Activated CD4-positive, alpha-beta memory T cell treated with anti-CD3 and anti-CD28 coated beads for 36 hours (primary cell): ENCODE measurements at regions of chr10 and their contacts with region 1.

Region 1: DNA sequence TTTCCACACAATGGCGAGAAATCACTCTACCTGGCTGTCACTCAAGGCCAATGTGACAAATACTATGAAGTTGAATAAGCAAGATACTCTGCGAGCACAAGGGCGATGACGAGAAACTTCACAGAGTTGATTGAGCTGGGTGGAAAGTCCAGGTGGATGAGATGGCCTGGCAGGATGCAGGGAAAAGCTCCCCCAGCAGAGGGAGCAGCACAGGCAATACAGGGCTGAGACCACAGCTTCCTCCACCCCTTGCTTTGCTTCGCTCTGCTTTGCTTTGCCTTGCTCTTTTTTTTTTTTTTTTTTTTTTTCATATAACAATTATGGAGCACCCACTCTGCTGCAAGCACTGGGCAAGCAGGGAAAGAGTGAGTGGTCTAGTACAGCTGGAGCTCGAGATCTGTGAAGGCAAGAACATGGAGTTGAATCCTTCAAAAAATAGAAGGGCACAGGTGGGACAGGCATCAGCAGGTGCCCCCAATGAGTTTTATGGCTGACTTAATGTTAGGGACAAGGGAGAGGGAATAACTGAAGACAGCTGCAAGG is 88.3 kb downstream of the CABCOCO1 start:
- DNase-seq: peak; percentile 84
- H3K4me3 Mint-ChIP-seq: no peak overlapping the region
- H3K27ac Mint-ChIP-seq: peak overlapping the region; percentile 44
- H3K4me1 Mint-ChIP-seq: peaks cover 24% of the 10 kb centered on the region
- H3K27me3 Mint-ChIP-seq: no peaks in the 10 kb centered on the region

Region 2: DNA sequence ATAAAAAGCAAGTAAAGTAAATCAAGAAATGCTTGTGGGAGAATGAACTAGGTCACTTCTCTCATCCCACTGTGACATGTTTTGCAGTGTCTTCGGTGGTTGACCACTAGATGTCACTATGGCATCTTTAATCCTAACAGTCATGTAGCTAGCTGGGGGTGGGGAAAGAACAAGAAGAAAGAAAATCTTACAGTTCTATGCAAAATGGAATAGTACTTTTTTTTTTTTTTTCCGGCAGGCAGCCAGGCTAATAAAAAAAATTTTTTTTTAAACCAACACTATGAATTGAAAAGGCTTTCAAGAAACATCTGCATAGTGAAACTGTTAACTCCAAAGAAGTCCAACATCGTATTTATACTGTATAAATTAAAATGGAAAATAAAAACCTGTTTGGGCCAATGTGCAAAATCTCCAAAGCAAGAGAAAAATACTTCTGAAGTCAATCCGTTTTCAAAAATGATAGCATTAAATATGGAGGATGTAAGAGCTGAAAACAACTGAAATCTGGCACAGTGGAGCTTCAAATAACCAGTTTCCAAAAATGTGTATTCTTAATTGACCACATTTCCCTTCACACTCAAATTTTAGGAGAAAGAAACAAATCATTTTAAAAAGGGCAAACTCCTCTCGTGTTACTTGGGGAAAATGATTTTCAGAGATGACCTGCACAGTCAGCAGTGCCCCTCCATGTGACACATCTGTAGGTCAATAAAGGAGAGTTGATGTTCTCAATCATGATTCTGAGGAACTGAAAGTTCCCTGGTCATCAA is 934.2 kb before region 1 on chr10:
- CTCF ChIA-PET with region 1: no interaction called
- POLR2A ChIA-PET with region 1: no interaction called
- intact Hi-C with region 1: loop called (anchors 10 kb)
- DNase-seq: peak; percentile 15
- H3K4me3 Mint-ChIP-seq: no peak overlapping the region
- H3K27ac Mint-ChIP-seq: no peak overlapping the region
- H3K4me1 Mint-ChIP-seq: peaks cover 3% of the 10 kb centered on the region
- H3K27me3 Mint-ChIP-seq: no peaks in the 10 kb centered on the region

Region 3: DNA sequence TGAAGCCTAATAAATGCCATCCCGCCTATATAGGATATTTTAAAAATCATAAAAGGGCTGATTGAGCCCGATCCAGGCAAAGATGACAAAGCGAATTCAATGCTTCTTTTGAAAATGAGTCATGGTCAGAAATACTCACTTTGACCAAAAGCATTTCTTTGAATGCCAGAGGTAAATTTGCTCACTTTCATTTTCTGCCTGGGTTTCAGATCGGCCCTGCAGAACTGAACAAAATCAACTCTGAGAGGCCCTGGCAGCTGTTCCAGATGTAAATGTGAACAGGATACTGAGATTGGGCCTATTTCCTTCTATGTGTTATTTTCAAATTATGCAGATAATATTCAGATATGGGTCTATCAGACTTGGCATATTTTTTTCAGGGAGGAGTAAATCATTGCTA is 35.7 kb after region 1 on chr10:
- CTCF ChIA-PET with region 1: interaction called, 10 read pairs
- POLR2A ChIA-PET with region 1: interaction called, 4 read pairs
- intact Hi-C with region 1: loop called (anchors 1 kb)
- DNase-seq: peak; percentile 49
- H3K4me3 Mint-ChIP-seq: no peak overlapping the region
- H3K27ac Mint-ChIP-seq: peak overlapping the region; percentile 19
- H3K4me1 Mint-ChIP-seq: peaks cover 49% of the 10 kb centered on the region
- H3K27me3 Mint-ChIP-seq: no peaks in the 10 kb centered on the region

Region 4: GRCh38 chr10:61821153-61821552 is 70.2 kb after region 1 on chr10:
- CTCF ChIA-PET with region 1: interaction called, 18 read pairs
- POLR2A ChIA-PET with region 1: interaction called, 3 read pairs
- intact Hi-C with region 1: loop called (anchors 5 kb)
- DNase-seq: no peak
- H3K4me3 Mint-ChIP-seq: no peak overlapping the region
- H3K27ac Mint-ChIP-seq: no peak overlapping the region
- H3K4me1 Mint-ChIP-seq: no peaks in the 10 kb centered on the region
- H3K27me3 Mint-ChIP-seq: no peaks in the 10 kb centered on the region

Region 5: GRCh38 chr10:61869774-61870525 is 119.0 kb after region 1 on chr10:
- CTCF ChIA-PET with region 1: interaction called, 44 read pairs
- POLR2A ChIA-PET with region 1: no interaction called
- intact Hi-C with region 1: loop called (anchors 1 kb)
- DNase-seq: no peak
- H3K4me3 Mint-ChIP-seq: no peak overlapping the region
- H3K27ac Mint-ChIP-seq: no peak overlapping the region
- H3K4me1 Mint-ChIP-seq: peaks cover 13% of the 10 kb centered on the region
- H3K27me3 Mint-ChIP-seq: no peaks in the 10 kb centered on the region

Region 6: DNA sequence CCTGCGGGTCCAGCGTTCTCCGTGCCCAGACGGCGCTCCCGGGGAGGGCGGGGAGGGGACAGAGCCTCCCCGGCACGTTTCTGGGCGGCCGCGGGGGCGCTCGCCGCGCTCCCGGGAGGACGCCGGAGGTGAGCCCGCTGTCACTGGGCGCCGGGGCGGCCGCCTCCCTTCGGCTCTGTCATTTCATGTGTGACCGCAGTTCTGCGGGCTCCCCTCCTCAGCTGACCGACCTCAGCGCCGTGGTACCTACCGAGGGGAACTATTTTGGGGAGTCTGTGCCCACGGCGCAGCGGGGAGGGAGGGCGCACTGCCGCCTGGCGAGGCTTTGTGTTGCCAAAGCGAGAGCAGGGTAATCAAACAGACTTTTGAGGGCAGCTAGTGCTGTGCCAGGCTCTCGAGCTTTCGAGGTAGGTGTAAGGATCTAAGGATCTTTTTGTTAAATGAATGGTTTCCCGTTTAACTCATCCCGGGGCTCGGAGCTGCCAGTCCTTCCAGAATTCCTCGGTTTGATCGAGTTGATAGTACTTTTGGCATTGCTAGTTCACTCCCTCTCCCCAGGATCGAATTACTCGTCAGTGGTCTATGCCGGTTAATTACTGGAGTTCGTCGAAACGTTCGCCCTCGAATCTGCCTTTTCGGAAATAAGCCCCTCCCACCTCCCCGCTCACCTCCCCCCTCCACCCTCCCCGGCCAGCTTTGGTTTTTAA is 152.4 kb after region 1 on chr10:
- CTCF ChIA-PET with region 1: interaction called, 14 read pairs
- POLR2A ChIA-PET with region 1: interaction called, 4 read pairs
- intact Hi-C with region 1: no loop called
- DNase-seq: peak; percentile 84
- H3K4me3 Mint-ChIP-seq: peak overlapping the region; percentile 90
- H3K27ac Mint-ChIP-seq: peak overlapping the region; percentile 95
- H3K4me1 Mint-ChIP-seq: peaks cover 45% of the 10 kb centered on the region
- H3K27me3 Mint-ChIP-seq: no peaks in the 10 kb centered on the region

Region 7: DNA sequence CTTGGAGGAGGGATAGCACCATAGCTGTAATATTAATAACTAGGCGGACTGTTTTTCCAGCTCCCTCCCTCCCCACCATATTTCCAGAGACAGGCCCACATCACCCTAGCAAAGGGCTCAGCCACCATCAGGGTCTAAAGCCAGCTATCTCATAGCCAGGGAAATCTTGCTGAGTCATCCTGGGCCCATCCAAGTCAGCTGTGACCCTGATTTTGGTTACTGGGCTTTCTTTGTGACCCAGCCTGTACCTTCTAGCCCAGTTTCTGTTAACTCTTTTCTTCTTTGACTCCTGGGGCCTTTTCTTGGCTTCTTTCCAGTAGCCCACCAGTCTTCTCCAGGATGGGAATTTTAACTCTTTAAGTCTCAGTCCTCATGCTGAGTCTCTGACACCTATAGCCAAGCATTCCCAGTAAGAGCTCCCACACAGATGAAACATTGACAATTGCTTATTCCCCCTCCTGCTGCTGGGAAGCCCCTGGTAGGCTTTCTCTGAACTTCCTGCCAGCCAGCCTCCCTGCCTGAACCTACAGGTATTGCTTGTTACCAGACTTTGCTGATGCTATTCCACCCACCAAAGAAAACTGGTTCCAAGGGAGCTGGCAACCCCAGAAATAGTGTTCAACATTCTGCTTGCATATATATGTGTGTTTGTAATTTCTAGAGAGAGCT is 1018.7 kb after region 1 on chr10:
- CTCF ChIA-PET with region 1: no interaction called
- POLR2A ChIA-PET with region 1: no interaction called
- intact Hi-C with region 1: no loop called
- DNase-seq: peak; percentile 28
- H3K4me3 Mint-ChIP-seq: no peak overlapping the region
- H3K27ac Mint-ChIP-seq: peak overlapping the region; percentile 19
- H3K4me1 Mint-ChIP-seq: peaks cover 14% of the 10 kb centered on the region
- H3K27me3 Mint-ChIP-seq: no peaks in the 10 kb centered on the region